ENCODE measurements at regions of chr3 and their contacts with region 1.

Region 1: GRCh38 chr3:150787741-150788370 is 24.9 kb upstream of the SIAH2 start:
- DNase-seq: peak; percentile 90
- H3K4me3 Mint-ChIP-seq: no peak overlapping the region
- H3K27ac Mint-ChIP-seq: peak overlapping the region; percentile 10
- H3K4me1 Mint-ChIP-seq: peaks cover 46% of the 10 kb centered on the region
- H3K27me3 Mint-ChIP-seq: peaks cover 2% of the 10 kb centered on the region

Region 2: DNA sequence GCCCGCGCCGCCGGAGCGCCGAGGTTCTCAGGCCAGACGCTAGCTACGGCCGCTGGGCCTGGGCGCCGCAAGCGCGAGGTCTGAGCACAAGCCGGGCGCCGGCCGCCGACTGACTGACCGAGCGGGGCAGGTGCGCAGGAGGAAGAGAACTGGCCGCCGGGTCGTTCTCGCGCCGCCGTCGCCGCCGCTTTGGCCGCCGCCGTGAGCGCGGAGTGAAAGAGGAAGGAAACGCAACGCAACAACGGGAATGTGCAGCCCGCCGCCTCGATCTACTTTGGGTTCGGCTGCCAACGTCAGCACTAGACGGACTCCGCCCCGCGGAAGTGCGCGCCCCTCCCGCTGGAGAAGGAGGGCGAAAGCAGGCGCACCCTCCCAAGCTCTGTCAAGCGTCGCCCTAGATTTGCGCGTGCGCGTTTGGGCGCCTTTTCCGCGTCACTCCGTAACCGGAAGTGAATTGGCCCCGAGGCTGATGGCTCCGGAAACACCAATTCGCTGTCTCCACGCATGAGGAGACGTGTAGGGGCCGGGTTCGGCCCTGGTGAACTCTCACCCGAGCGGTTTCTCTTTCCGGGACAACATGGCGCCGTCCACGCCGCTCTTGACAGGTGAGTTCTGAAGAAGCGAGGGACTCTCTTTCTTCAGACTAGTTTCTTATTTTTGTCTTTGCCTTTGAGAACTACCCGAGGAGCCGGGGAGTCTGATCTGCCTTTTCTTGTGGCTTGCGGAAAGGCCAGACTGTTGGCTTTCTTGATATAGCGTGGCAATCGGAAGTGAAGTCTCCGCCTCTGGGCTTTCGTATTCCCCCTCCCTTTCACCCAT is 241.4 kb before region 1 on chr3 and contains the starts of genes EIF2A and SERP1:
- CTCF ChIA-PET with region 1: interaction called, 3 read pairs
- POLR2A ChIA-PET with region 1: no interaction called
- intact Hi-C with region 1: loop called (anchors 2 kb)
- DNase-seq: peak; percentile 100
- H3K4me3 Mint-ChIP-seq: peak within 1 kb of the TSS; percentile 99
- H3K27ac Mint-ChIP-seq: peak within 1 kb of the TSS; percentile 96
- H3K4me1 Mint-ChIP-seq: peaks cover 58% of the 10 kb centered on the region
- H3K27me3 Mint-ChIP-seq: no peaks in the 10 kb centered on the region
- total RNA-seq, gene EIF2A: 131 to 137 TPM
- total RNA-seq, gene SERP1: 100 to 111 TPM

Region 3: DNA sequence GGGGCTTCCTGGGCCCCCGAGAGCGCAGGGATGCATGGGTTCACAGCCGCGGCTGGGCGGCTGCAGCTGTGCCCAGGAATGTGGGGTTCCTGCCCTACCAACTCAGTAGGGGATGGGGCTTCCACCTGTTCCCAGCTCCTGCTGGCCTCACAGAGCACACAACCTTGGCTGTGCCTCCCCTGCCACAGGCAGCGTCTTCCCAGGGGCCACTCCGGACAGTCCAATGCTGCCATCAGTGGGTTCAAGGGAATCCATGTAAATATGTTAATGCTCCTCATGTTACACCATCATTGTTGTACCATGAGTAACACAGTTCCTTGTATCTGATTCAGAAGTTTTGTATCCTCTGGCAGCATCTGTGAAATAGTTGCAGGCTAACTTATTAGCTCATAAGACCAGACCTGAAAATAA is 12.8 kb before region 1 on chr3:
- CTCF ChIA-PET with region 1: interaction called, 15 read pairs
- POLR2A ChIA-PET with region 1: no interaction called
- intact Hi-C with region 1: no loop called
- DNase-seq: no peak
- H3K4me3 Mint-ChIP-seq: no peak overlapping the region
- H3K27ac Mint-ChIP-seq: no peak overlapping the region
- H3K4me1 Mint-ChIP-seq: no peaks in the 10 kb centered on the region
- H3K27me3 Mint-ChIP-seq: peaks cover 4% of the 10 kb centered on the region

Region 4: DNA sequence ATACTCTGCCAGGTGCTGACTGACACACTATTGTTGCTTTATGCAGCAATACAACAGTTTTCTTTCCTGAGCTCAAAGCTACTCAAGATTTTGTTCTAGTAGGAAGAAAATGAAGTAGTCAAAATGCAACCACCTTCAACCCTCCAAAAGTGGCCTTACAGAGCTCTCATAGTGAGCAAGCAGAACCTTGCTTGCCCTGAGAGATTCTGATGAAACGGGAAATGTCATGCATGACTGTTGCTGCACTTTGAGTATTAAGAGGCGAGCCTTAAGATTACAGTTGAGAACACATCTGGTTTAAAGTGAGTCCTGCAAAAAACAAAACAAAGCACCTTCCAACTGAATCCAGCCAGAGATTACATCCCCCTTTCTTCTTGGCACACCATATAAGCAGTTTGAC is 87.7 kb after region 1 on chr3:
- CTCF ChIA-PET with region 1: interaction called, 5 read pairs
- POLR2A ChIA-PET with region 1: no interaction called
- intact Hi-C with region 1: loop called (anchors 2 kb)
- DNase-seq: peak; percentile 16
- H3K4me3 Mint-ChIP-seq: no peak overlapping the region
- H3K27ac Mint-ChIP-seq: no peak overlapping the region
- H3K4me1 Mint-ChIP-seq: peaks cover 5% of the 10 kb centered on the region
- H3K27me3 Mint-ChIP-seq: peaks cover 3% of the 10 kb centered on the region

Region 5: GRCh38 chr3:151146071-151146730 is 358.3 kb after region 1 on chr3:
- CTCF ChIA-PET with region 1: interaction called, 10 read pairs
- POLR2A ChIA-PET with region 1: no interaction called
- intact Hi-C with region 1: loop called (anchors 1 kb)
- DNase-seq: peak; percentile 70
- H3K4me3 Mint-ChIP-seq: no peak overlapping the region
- H3K27ac Mint-ChIP-seq: no peak overlapping the region
- H3K4me1 Mint-ChIP-seq: no peaks in the 10 kb centered on the region
- H3K27me3 Mint-ChIP-seq: no peaks in the 10 kb centered on the region